ENCODE measurements at regions of chr1 and their contacts with region 1.

Region 1: GRCh38 chr1:68321084-68321685 is 88.9 kb upstream of the WLS start:
- DNase-seq: peak; percentile 73 to 81 (median 76)
- H3K4me3 ChIP-seq: no peak overlapping the region
- H3K27ac ChIP-seq: peak overlapping the region in 1 of 2 donors; percentile 41
- H3K4me1 ChIP-seq: peaks cover 11% of the 10 kb centered on the region
- H3K27me3 ChIP-seq: no peaks in the 10 kb centered on the region
- CTCF ChIP-seq: peak; percentile 33 to 61 (median 49)
- EP300 ChIP-seq: no peak
- POLR2A ChIP-seq: no peak

Region 2: GRCh38 chr1:68232354-68233148 is 88.6 kb before region 1 on chr1 and contains the start of gene WLS:
- intact Hi-C with region 1: loop called in 2 of 4 experiments (anchors 5 to 10 kb)
- DNase-seq: peak; percentile 85 to 88 (median 87)
- H3K4me3 ChIP-seq: peak within 1 kb of the TSS; percentile 78
- H3K27ac ChIP-seq: peak within 1 kb of the TSS; percentile 73 to 86
- H3K4me1 ChIP-seq: peaks cover 7% of the 10 kb centered on the region
- H3K27me3 ChIP-seq: no peaks in the 10 kb centered on the region
- CTCF ChIP-seq: peak in 1 of 3 donors; percentile 46
- EP300 ChIP-seq: no peak
- POLR2A ChIP-seq: peak; percentile 85
- total RNA-seq, gene WLS: 42.2 to 168 (median 120) TPM

Measured in ovary (tissue), 10 donors.